HCT116 (cell line): ENCODE measurements at regions of chr2 and their contacts with region 1.

Region 1: GRCh38 chr2:20001361-20001863 is 11.1 kb downstream of the MATN3 start:
- DNase-seq: no peak
- ATAC-seq: no peak
- H3K4me3 ChIP-seq: no peak overlapping the region
- H3K27ac ChIP-seq: no peak overlapping the region
- H3K4me1 ChIP-seq: no peaks in the 10 kb centered on the region
- H3K27me3 ChIP-seq: no peaks in the 10 kb centered on the region
- CTCF ChIP-seq: no peak
- POLR2A ChIP-seq: no peak
- RAD21 ChIP-seq: no peak

Region 2: GRCh38 chr2:19632403-19632991 is 368.9 kb before region 1 on chr2:
- CTCF ChIA-PET with region 1: no interaction called
- POLR2A ChIA-PET with region 1: no interaction called
- RAD21 ChIA-PET with region 1: no interaction called
- intact Hi-C with region 1: no loop called
- DNase-seq: no peak
- ATAC-seq: no peak
- H3K4me3 ChIP-seq: no peak overlapping the region
- H3K27ac ChIP-seq: no peak overlapping the region
- H3K4me1 ChIP-seq: no peaks in the 10 kb centered on the region
- H3K27me3 ChIP-seq: no peaks in the 10 kb centered on the region
- CTCF ChIP-seq: no peak
- POLR2A ChIP-seq: no peak
- RAD21 ChIP-seq: no peak

Region 3: GRCh38 chr2:20015472-20016083 is 14.2 kb after region 1 on chr2:
- CTCF ChIA-PET with region 1: interaction called, 10 read pairs
- POLR2A ChIA-PET with region 1: no interaction called
- RAD21 ChIA-PET with region 1: no interaction called
- intact Hi-C with region 1: no loop called
- DNase-seq: peak; percentile 26
- ATAC-seq: peak; percentile 74
- H3K4me3 ChIP-seq: no peak overlapping the region
- H3K27ac ChIP-seq: no peak overlapping the region
- H3K4me1 ChIP-seq: no peaks in the 10 kb centered on the region
- H3K27me3 ChIP-seq: no peaks in the 10 kb centered on the region
- CTCF ChIP-seq: peak; percentile 52 to 83 (median 70)
- POLR2A ChIP-seq: no peak
- RAD21 ChIP-seq: peak; percentile 77

Region 4: GRCh38 chr2:20304411-20304810 is 303.0 kb after region 1 on chr2:
- CTCF ChIA-PET with region 1: no interaction called
- POLR2A ChIA-PET with region 1: no interaction called
- RAD21 ChIA-PET with region 1: no interaction called
- intact Hi-C with region 1: no loop called
- DNase-seq: no peak
- ATAC-seq: no peak
- H3K4me3 ChIP-seq: no peak overlapping the region
- H3K27ac ChIP-seq: no peak overlapping the region
- H3K4me1 ChIP-seq: peaks cover 0 to 4% of the 10 kb centered on the region in 2 experiments; a peak in 1 of 4 replicates
- H3K27me3 ChIP-seq: no peaks in the 10 kb centered on the region
- CTCF ChIP-seq: no peak
- POLR2A ChIP-seq: no peak
- RAD21 ChIP-seq: no peak